GM10248 (cell line): ENCODE measurements at regions of chr1 and their contacts with region 1.

Region 1: GRCh38 chr1:88180449-88181108 is 503.5 kb upstream of the PKN2 start:
- DNase-seq: peak; percentile 40
- CTCF ChIP-seq: peak; percentile 95

Region 2: DNA sequence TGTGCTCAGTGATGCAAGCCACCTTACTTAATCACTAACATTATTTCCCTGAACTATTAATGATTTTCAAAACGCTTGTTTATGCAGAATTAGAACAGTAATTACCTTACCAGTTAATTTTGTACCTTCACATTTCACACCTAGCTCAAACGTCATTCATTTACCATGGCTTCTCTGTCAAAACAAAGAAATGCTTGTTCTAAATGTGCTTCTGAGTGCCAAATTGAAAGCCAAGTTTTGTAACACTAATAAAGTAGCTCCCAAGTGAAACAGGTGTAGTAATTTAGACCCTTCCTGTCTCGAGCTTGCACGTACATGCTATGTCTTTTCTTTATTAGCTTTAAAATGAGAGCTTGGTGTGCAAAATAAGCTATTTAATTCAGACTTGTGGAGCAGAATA is 30.2 kb before region 1 on chr1:
- CTCF ChIA-PET with region 1: interaction called, 11 read pairs
- POLR2A ChIA-PET with region 1: no interaction called
- DNase-seq: no peak
- CTCF ChIP-seq: no peak

Region 3: DNA sequence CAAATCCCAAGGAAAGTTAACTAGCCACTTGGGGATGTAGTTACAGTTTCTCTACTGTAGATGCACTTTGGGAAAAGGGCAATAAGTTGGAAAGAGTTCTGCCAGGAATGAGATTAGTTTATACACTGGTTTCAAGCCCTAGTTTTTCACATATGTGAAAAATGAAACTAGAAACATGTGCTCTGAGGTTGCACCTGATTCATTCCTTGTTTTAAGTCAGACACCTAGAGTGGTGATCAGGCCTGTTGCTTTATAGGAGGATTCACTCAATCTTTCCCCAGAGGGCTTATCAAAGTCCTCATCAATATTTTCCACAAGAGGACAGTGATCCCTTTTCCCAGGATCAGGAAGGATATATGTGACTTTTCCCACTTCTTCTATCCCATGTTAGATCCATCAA is 12.5 kb before region 1 on chr1:
- CTCF ChIA-PET with region 1: interaction called, 18 read pairs
- POLR2A ChIA-PET with region 1: no interaction called
- DNase-seq: no peak
- CTCF ChIP-seq: no peak

Region 4: GRCh38 chr1:88191917-88192316 is 11.3 kb after region 1 on chr1:
- CTCF ChIA-PET with region 1: interaction called, 33 read pairs
- POLR2A ChIA-PET with region 1: no interaction called
- DNase-seq: peak; percentile 10
- CTCF ChIP-seq: no peak

Region 5: GRCh38 chr1:88200545-88200944 is 20.0 kb after region 1 on chr1:
- CTCF ChIA-PET with region 1: interaction called, 16 read pairs
- POLR2A ChIA-PET with region 1: no interaction called
- DNase-seq: no peak
- CTCF ChIP-seq: no peak